CD8-positive, alpha-beta T cell (primary cell): ENCODE measurements at regions of chr17 and their contacts with region 1.

Region 1: DNA sequence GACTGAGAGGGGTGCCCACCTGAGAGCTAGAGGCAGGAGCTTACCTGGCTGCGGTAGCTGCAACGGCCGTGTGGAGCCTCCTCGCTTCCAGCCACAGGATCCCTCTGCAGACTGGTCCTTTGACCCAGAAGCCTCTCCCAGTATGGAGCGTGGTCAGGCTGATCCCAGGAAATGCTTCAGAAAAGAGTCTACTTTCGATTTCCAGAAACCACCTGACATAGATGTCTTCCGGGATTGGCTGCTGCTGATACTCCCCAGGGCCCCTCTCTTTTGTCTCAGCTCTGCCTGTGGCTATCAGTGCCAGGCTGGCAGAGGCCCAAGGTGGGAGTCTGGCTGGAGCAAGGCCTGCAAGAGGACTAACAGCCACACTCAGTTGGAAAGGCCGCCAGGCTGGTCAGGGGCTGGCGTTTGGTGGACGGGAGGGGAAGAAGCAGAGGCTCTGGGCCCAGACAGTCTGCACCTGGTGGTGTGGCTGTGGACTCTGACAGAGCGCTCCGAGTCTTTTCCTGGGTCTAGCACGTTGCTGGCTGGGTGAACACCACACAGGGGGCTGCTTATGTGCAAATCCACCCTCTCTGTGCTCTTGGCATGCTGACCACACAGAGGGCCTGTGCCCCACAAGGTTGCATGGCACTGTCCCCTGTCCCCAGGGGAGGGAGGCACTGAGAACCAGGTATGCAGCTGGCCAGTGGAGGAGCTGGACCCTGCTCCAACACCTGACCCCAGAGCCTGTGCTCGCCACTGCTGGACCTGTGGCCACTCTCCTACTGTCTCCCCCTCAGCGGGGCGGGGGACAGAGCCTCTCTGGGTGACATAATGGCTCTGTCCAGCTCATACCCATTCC is at the start of gene LGALS3BP:
- DNase-seq: peak in 7 of 9 experiments; percentile 6 to 64 (median 31)
- ATAC-seq: peak; percentile 84
- H3K4me3 ChIP-seq: peak within 1 kb of the TSS; percentile 48 to 78
- H3K4me3 Mint-ChIP-seq: peak within 1 kb of the TSS; percentile 79
- H3K27ac ChIP-seq: peak within 1 kb of the TSS; percentile 53 to 58
- H3K27ac Mint-ChIP-seq: peak within 1 kb of the TSS; percentile 83
- H3K4me1 ChIP-seq: peaks cover 25% of the 10 kb centered on the region
- H3K4me1 Mint-ChIP-seq: peaks cover 19% of the 10 kb centered on the region
- H3K27me3 ChIP-seq: no peaks in the 10 kb centered on the region
- H3K27me3 Mint-ChIP-seq: no peaks in the 10 kb centered on the region
- CTCF ChIP-seq: no peak
- total RNA-seq, gene LGALS3BP: 30.9 to 32.0 TPM

Region 2: GRCh38 chr17:78993241-78993956 is 13.4 kb after region 1 on chr17:
- CTCF ChIA-PET with region 1: interaction called, 15 read pairs
- POLR2A ChIA-PET with region 1: interaction called, 3 read pairs
- intact Hi-C with region 1: no loop called
- DNase-seq: peak; percentile 12 to 66 (median 59)
- ATAC-seq: peak; percentile 71
- H3K4me3 ChIP-seq: no peak overlapping the region
- H3K4me3 Mint-ChIP-seq: no peak overlapping the region
- H3K27ac ChIP-seq: no peak overlapping the region
- H3K27ac Mint-ChIP-seq: no peak overlapping the region
- H3K4me1 ChIP-seq: no peaks in the 10 kb centered on the region
- H3K4me1 Mint-ChIP-seq: peaks cover 6% of the 10 kb centered on the region
- H3K27me3 ChIP-seq: no peaks in the 10 kb centered on the region
- H3K27me3 Mint-ChIP-seq: no peaks in the 10 kb centered on the region
- CTCF ChIP-seq: peak; percentile 78